Activated CD4-positive, alpha-beta T cell treated with anti-CD3 and anti-CD28 coated beads for 36 hours (primary cell): ENCODE measurements at regions of chr3 and their contacts with region 1.

Region 1: GRCh38 chr3:178067721-178068120 is 468.5 kb upstream of the KCNMB2 start:
- DNase-seq: no peak
- ATAC-seq: no peak
- H3K4me3 Mint-ChIP-seq: no peak overlapping the region
- H3K27ac Mint-ChIP-seq: no peak overlapping the region
- H3K4me1 Mint-ChIP-seq: no peaks in the 10 kb centered on the region
- H3K27me3 Mint-ChIP-seq: no peaks in the 10 kb centered on the region

Region 2: GRCh38 chr3:176611703-176612102 is 1456.0 kb before region 1 on chr3:
- CTCF ChIA-PET with region 1: no interaction called
- POLR2A ChIA-PET with region 1: no interaction called
- intact Hi-C with region 1: loop called in 1 of 2 experiments (anchors 5 kb)
- DNase-seq: no peak
- ATAC-seq: no peak
- H3K4me3 Mint-ChIP-seq: no peak overlapping the region
- H3K27ac Mint-ChIP-seq: no peak overlapping the region
- H3K4me1 Mint-ChIP-seq: no peaks in the 10 kb centered on the region
- H3K27me3 Mint-ChIP-seq: no peaks in the 10 kb centered on the region

Region 3: DNA sequence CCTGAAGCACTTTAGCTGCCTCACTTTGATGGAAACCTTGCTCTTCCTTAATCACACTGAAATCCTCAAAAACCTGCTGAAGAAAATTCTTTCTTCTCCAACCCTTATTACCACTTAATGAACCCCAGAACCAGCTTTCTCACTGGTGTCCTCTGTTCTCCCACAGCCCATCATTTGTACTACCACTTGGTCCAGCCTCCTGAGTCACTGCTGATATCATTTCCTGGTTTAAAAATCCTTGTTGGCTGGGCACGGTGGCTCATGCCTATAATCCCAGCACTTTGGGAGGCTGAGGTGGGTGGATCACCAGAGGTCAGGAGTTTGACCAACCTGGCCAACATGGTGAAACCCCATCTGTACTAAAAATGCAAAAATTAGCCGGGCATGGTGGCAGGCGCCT is 49.9 kb after region 1 on chr3:
- CTCF ChIA-PET with region 1: no interaction called
- POLR2A ChIA-PET with region 1: no interaction called
- intact Hi-C with region 1: no loop called
- DNase-seq: no peak
- ATAC-seq: no peak
- H3K4me3 Mint-ChIP-seq: no peak overlapping the region
- H3K27ac Mint-ChIP-seq: no peak overlapping the region
- H3K4me1 Mint-ChIP-seq: peaks cover 6% of the 10 kb centered on the region
- H3K27me3 Mint-ChIP-seq: no peaks in the 10 kb centered on the region